ENCODE measurements at regions of chr11 and their contacts with region 1.

Region 1: DNA sequence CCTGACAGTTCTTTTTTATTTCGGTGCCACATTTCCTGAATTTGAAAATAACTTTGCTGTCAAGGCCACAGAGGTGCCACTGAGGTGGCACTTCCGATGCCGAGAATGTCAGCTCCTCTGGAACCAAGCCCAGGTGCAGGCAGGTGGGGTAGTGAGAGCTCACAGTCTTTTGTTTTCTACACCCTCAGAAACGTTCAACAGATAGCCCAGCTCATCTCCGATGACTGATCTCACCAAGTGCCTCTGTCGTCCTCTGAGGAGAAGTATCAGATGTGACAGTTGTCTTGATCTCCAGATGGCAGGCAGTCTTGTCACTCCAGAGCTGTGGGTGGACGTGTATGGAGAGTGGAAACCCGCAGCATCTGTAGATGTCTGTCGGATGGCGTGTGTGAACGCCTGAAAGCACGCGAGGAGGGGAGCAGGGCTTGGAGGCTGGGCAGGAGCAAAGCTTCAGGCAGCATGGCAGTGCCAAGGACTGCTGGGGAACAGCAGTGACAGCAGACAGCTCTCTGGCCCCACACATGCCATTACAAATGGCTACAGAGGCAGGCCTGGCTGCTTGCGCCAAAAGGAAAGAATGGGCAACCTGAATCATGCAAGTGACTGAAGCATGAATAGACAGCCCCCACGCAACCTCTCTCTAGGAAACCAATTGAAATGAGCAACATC is 877.0 kb downstream of the OPCML start:
- DNase-seq: no peak
- ATAC-seq: no peak
- H3K4me3 Mint-ChIP-seq: no peak overlapping the region
- H3K27ac Mint-ChIP-seq: no peak overlapping the region
- H3K4me1 Mint-ChIP-seq: no peaks in the 10 kb centered on the region
- H3K27me3 Mint-ChIP-seq: no peaks in the 10 kb centered on the region

Region 2: DNA sequence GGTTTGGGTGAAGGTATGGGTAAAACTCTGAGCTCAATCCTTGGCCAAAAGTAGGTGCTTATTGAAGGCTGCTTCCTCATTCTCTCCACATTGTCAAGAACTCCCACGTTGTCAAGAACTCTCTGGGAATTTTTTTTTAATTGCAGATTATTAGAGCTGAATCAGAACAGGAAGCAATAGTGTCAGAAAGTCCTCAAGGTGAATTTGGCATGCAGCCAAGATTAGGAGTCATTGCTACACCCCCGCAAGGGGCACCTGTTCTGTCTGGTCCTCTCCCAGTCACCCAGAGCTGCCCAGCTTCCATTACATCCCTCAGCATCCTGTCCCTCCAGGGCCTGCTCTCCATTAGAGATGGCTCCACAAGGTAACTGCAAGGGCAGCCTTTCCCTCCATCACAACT is 119.5 kb before region 1 on chr11:
- CTCF ChIA-PET with region 1: no interaction called
- POLR2A ChIA-PET with region 1: no interaction called
- intact Hi-C with region 1: no loop called
- DNase-seq: no peak
- ATAC-seq: no peak
- H3K4me3 Mint-ChIP-seq: no peak overlapping the region
- H3K27ac Mint-ChIP-seq: no peak overlapping the region
- H3K4me1 Mint-ChIP-seq: no peaks in the 10 kb centered on the region
- H3K27me3 Mint-ChIP-seq: no peaks in the 10 kb centered on the region

Region 3: GRCh38 chr11:132671851-132672370 is 16.6 kb after region 1 on chr11:
- CTCF ChIA-PET with region 1: interaction called, 3 read pairs
- POLR2A ChIA-PET with region 1: interaction called, 10 read pairs
- intact Hi-C with region 1: no loop called
- DNase-seq: no peak
- ATAC-seq: no peak
- H3K4me3 Mint-ChIP-seq: no peak overlapping the region
- H3K27ac Mint-ChIP-seq: no peak overlapping the region
- H3K4me1 Mint-ChIP-seq: no peaks in the 10 kb centered on the region
- H3K27me3 Mint-ChIP-seq: no peaks in the 10 kb centered on the region

Region 4: DNA sequence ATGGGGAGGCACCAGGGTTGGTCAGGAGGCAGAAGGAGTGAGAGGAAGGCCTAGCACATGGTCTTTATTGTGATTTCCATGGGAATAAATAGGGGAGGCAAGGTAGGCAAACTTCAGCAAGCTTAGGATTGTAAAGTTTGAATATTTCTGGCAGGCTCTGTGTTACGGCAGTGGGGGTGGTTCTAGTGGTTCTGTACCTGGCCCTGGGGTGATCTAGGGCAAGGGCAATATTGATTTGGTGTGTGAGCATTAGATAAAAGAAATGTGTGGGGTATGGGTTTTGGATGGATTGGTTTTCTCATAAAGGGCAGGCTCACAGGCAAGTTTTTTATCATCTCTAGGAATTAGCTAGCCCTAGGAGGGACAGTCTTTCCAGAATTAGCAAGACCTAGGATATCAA is 292.9 kb after region 1 on chr11:
- CTCF ChIA-PET with region 1: no interaction called
- POLR2A ChIA-PET with region 1: interaction called, 11 read pairs
- intact Hi-C with region 1: no loop called
- DNase-seq: no peak
- ATAC-seq: no peak
- H3K4me3 Mint-ChIP-seq: no peak overlapping the region
- H3K27ac Mint-ChIP-seq: no peak overlapping the region
- H3K4me1 Mint-ChIP-seq: peaks cover 2% of the 10 kb centered on the region
- H3K27me3 Mint-ChIP-seq: peaks cover 19% of the 10 kb centered on the region